ENCODE measurements at regions of chr7 and their contacts with region 1.

Region 1: DNA sequence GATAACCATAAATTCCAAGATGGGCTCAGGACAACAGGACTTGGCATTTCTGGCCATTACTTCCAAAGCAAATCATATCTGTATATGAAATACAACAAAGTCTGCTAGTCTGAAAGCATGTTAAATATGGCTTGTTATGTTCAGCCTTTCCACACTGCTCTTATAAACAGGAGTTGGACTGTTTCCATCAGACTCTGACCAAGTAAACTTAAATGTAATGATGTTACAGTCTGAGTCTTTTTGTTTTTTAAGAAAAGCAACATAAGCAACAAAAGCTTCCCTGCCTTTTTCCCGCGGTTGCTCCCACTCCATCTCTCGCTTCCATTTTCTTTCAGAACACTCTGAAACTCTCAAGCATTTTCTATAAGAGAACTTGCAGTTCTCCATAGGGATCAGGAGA is 8.1 kb upstream of the CDCA7L start:
- DNase-seq: no peak
- CTCF ChIP-seq: no peak

Region 2: DNA sequence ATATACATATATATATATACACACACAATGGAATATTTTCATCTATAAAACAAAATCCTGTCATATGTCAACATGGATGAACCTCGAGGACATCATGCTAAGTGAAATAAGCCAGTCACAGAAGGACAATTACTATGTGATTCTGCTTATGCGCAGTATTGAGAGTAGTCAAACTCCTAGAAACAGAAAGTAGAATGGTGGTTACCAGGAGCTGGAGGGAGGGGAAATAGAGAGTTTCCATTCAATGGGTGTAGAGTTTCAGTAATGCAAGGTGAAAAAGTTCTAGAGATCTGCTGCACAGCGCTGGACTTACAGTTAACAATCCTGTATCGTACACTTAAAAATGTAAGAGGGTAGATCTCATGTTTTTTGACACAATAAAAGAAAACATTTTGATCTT is 190.0 kb before region 1 on chr7:
- CTCF ChIA-PET with region 1: no interaction called
- POLR2A ChIA-PET with region 1: no interaction called
- DNase-seq: no peak
- CTCF ChIP-seq: no peak

Region 3: DNA sequence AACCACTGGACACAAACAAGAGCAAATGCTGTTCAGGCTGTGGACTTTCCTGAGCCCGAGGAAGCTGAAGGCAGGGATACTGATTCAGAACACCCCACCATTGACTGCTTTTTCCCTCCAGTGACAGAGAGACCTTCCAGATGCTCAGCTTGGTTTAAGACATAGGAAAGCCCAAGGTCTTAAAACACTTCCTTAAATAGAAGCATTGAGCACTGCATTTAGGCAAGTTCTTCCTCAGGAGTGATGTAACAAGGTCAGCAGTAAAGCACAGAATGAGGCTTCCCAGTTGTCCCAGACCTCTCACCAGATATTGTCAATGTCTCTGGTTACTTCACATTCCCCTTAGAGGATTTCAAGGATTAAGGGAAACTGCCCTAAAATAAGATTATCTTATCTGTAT is 11.5 kb after region 1 on chr7:
- CTCF ChIA-PET with region 1: interaction called, 15 read pairs
- POLR2A ChIA-PET with region 1: no interaction called
- DNase-seq: no peak
- CTCF ChIP-seq: no peak